ENCODE measurements at regions of chr1 and their contacts with region 1.

Region 1: DNA sequence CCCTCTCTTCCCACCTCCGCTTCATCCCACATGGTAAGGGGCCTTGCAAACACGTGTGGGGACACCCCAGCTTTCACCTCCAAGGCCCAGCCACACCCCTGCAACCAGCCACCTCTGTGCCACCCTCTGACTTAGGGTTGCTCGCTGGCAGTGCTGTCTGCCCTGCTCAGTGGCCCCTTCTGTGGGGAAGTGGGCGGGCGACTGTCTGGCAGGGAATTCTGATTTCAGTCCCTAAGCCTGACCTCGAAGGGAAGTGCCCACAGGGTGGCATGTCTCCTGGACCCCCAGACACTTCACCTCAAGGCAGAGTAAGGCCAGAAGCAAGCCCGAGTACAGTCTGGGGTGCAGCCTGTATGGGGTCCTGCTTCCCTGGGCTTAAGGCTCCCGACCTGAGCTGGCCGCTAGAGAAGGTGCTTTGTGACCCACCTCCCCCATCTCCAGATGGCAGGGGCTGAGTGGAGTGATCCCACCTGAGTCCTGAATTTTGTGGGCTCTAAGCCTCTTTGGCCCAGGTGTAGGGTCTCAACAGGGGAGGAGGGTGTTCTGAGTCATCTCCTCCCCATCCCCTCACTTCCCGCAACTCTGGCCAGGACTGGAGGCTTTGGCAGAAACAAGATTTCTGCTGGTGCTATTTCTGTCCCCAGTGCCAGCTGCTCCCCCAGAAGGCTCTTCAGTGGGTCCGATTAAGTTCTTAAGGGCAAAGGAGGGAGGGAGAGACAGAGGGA is 7.0 kb downstream of the RD3 start:
- DNase-seq: no peak
- H3K4me3 ChIP-seq: no peak overlapping the region
- H3K27ac ChIP-seq: no peak overlapping the region
- H3K27me3 ChIP-seq: peaks cover 20% of the 10 kb centered on the region
- CTCF ChIP-seq: no peak

Region 2: GRCh38 chr1:211469938-211470529 is 14.9 kb before region 1 on chr1:
- CTCF ChIA-PET with region 1: interaction called, 44 read pairs
- POLR2A ChIA-PET with region 1: no interaction called
- DNase-seq: peak; percentile 21
- H3K4me3 ChIP-seq: no peak overlapping the region
- H3K27ac ChIP-seq: no peak overlapping the region
- H3K27me3 ChIP-seq: peaks cover 24% of the 10 kb centered on the region
- CTCF ChIP-seq: peak; percentile 93